Natural killer cell (primary cell): ENCODE measurements at regions of chr15 and their contacts with region 1.

Region 1: GRCh38 chr15:95291898-95292472 is 1038.5 kb upstream of the NR2F2 start:
- DNase-seq: peak in 1 of 2 donors; percentile 50
- ATAC-seq: peak in 1 of 3 donors; percentile 47
- H3K4me3 ChIP-seq: no peak overlapping the region
- H3K4me3 Mint-ChIP-seq: no peak overlapping the region
- H3K27ac ChIP-seq: no peak overlapping the region
- H3K27ac Mint-ChIP-seq: no peak overlapping the region
- H3K4me1 ChIP-seq: no peaks in the 10 kb centered on the region
- H3K4me1 Mint-ChIP-seq: no peaks in the 10 kb centered on the region
- H3K27me3 ChIP-seq: peaks cover 27% of the 10 kb centered on the region
- H3K27me3 Mint-ChIP-seq: peaks cover 64 to 96% of the 10 kb centered on the region in 2 donors
- CTCF ChIP-seq: peak; percentile 80

Region 2: GRCh38 chr15:94163999-94164807 is 1127.8 kb before region 1 on chr15:
- intact Hi-C with region 1: loop called (anchors 10 kb)
- DNase-seq: peak; percentile 57 to 77
- ATAC-seq: peak; percentile 71 to 89 (median 76)
- H3K4me3 ChIP-seq: no peak overlapping the region
- H3K4me3 Mint-ChIP-seq: peak overlapping the region; percentile 4
- H3K27ac ChIP-seq: no peak overlapping the region
- H3K27ac Mint-ChIP-seq: no peak overlapping the region
- H3K4me1 ChIP-seq: no peaks in the 10 kb centered on the region
- H3K4me1 Mint-ChIP-seq: peaks cover 13 to 14% of the 10 kb centered on the region in 2 donors
- H3K27me3 ChIP-seq: no peaks in the 10 kb centered on the region
- H3K27me3 Mint-ChIP-seq: no peaks in the 10 kb centered on the region
- CTCF ChIP-seq: peak; percentile 99

Region 3: DNA sequence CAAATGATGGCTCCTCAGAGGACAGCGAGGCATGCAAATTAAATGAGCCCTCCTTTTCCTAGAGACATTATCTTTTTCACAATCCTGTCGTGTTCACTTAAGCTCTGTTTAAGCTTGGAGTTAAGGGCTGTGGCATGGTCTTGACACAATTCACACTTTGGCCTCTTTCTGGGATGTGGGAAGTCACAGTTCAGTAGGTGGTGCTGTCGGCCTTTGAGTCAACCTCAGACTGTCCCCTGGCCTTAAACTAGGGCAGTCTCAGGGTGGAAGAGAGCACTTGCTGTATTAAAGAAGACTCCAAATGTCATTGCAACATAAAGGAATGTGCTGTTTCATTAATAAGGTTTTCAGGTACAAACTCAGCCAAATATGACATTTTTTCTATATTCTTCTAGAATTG is 709.6 kb before region 1 on chr15:
- intact Hi-C with region 1: loop called (anchors 5 kb)
- DNase-seq: peak in 1 of 2 donors; percentile 52
- ATAC-seq: peak; percentile 64 to 83 (median 69)
- H3K4me3 ChIP-seq: no peak overlapping the region
- H3K4me3 Mint-ChIP-seq: no peak overlapping the region
- H3K27ac ChIP-seq: no peak overlapping the region
- H3K27ac Mint-ChIP-seq: no peak overlapping the region
- H3K4me1 ChIP-seq: peaks cover 22% of the 10 kb centered on the region
- H3K4me1 Mint-ChIP-seq: peaks cover 31 to 40% of the 10 kb centered on the region in 2 donors
- H3K27me3 ChIP-seq: peaks cover 33% of the 10 kb centered on the region
- H3K27me3 Mint-ChIP-seq: peaks cover 44 to 87% of the 10 kb centered on the region in 2 donors
- CTCF ChIP-seq: peak; percentile 42

Region 4: DNA sequence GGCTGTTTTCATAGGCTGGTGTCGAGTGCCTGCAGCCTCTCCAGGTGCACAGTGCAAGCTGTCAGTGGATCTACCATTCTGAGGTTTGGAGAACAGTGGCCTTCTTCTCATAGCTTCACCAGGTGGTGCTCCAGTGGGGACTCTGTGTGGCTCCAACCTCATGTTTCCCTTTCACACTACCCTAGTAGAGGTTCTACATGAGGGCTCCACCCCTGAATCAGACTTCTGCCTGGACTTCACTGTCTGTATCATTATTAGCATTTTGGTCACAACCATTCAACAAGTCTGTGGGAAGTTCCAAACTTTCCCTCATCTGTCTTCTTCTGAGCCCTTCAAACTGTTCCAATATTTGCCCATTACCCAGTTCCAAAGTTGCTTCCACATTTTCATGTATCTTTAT is 57.0 kb before region 1 on chr15:
- intact Hi-C with region 1: no loop called
- DNase-seq: no peak
- ATAC-seq: no peak
- H3K4me3 ChIP-seq: no peak overlapping the region
- H3K4me3 Mint-ChIP-seq: no peak overlapping the region
- H3K27ac ChIP-seq: no peak overlapping the region
- H3K27ac Mint-ChIP-seq: no peak overlapping the region
- H3K4me1 ChIP-seq: no peaks in the 10 kb centered on the region
- H3K4me1 Mint-ChIP-seq: no peaks in the 10 kb centered on the region
- H3K27me3 ChIP-seq: no peaks in the 10 kb centered on the region
- H3K27me3 Mint-ChIP-seq: peaks cover 13 to 42% of the 10 kb centered on the region in 2 donors
- CTCF ChIP-seq: no peak

Region 5: DNA sequence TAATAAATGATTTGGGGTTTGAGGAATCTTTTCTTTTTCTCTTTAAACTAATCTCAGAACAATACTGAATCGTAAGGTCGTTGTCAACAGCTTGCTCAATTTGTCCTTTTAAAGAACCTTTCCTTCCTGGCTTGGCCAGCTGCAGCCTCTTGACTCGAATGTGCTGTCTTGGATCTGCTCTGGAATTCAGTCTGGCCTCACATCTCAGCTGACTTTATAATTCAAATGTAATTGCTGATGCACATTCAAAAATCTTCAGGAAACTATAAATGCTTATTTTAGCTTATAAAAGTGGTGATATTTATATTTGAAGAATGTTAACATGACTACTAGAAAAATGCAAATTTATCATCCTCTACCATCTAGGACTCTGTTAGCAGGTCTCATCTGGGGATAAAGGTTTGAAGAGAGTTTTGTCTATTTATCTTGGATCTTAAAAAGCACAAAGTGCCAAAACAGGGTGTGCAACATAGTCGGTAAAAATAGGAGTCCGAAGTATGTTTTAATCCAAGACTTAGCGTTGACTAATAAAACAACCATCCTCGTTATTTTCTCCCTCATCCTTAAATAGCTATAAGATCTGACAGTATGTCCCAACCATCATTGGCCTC is 25.4 kb before region 1 on chr15:
- intact Hi-C with region 1: no loop called
- DNase-seq: no peak
- ATAC-seq: no peak
- H3K4me3 ChIP-seq: no peak overlapping the region
- H3K4me3 Mint-ChIP-seq: no peak overlapping the region
- H3K27ac ChIP-seq: no peak overlapping the region
- H3K27ac Mint-ChIP-seq: no peak overlapping the region
- H3K4me1 ChIP-seq: no peaks in the 10 kb centered on the region
- H3K4me1 Mint-ChIP-seq: no peaks in the 10 kb centered on the region
- H3K27me3 ChIP-seq: peaks cover 7% of the 10 kb centered on the region
- H3K27me3 Mint-ChIP-seq: peaks cover 31 to 68% of the 10 kb centered on the region in 2 donors
- CTCF ChIP-seq: no peak

Region 6: GRCh38 chr15:95341686-95342085 is 49.7 kb after region 1 on chr15:
- intact Hi-C with region 1: no loop called
- DNase-seq: no peak
- ATAC-seq: no peak
- H3K4me3 ChIP-seq: no peak overlapping the region
- H3K4me3 Mint-ChIP-seq: no peak overlapping the region
- H3K27ac ChIP-seq: no peak overlapping the region
- H3K27ac Mint-ChIP-seq: no peak overlapping the region
- H3K4me1 ChIP-seq: no peaks in the 10 kb centered on the region
- H3K4me1 Mint-ChIP-seq: no peaks in the 10 kb centered on the region
- H3K27me3 ChIP-seq: peaks cover 7% of the 10 kb centered on the region
- H3K27me3 Mint-ChIP-seq: peaks cover 13 to 48% of the 10 kb centered on the region in 2 donors
- CTCF ChIP-seq: no peak

Region 7: GRCh38 chr15:95371664-95372063 is 79.7 kb after region 1 on chr15:
- intact Hi-C with region 1: no loop called
- DNase-seq: no peak
- ATAC-seq: no peak
- H3K4me3 ChIP-seq: no peak overlapping the region
- H3K4me3 Mint-ChIP-seq: no peak overlapping the region
- H3K27ac ChIP-seq: no peak overlapping the region
- H3K27ac Mint-ChIP-seq: no peak overlapping the region
- H3K4me1 ChIP-seq: no peaks in the 10 kb centered on the region
- H3K4me1 Mint-ChIP-seq: no peaks in the 10 kb centered on the region
- H3K27me3 ChIP-seq: no peaks in the 10 kb centered on the region
- H3K27me3 Mint-ChIP-seq: peaks cover 22 to 54% of the 10 kb centered on the region in 2 donors
- CTCF ChIP-seq: no peak